AG04449 (cell line): ENCODE measurements at regions of chr4 and their contacts with region 1.

Region 1: GRCh38 chr4:67909905-67910584 is 26.2 kb upstream of the TMPRSS11D start:
- DNase-seq: no peak
- H3K4me3 ChIP-seq: no peak overlapping the region
- CTCF ChIP-seq: peak; percentile 24

Region 2: DNA sequence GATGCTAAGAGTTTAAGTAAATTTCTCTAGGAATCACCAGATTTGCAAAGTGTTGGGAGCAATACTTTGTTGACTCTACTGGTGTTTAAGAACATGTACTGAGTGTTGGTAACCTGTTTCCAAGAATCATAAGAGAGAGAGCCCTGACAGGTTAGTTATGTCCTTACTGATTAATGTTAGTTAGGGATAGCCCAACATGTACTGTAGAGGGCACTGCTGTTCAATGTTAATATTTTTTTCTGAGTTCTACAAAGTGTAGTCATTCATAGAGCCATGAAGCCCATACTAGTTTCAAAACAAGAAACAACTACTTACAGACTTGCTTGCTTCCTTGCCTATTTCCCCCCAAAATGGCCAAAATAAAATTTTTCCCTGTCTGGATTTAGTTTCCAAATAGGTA is 38.2 kb before region 1 on chr4:
- CTCF ChIA-PET with region 1: interaction called, 73 read pairs
- POLR2A ChIA-PET with region 1: no interaction called
- DNase-seq: no peak
- H3K4me3 ChIP-seq: no peak overlapping the region
- CTCF ChIP-seq: peak; percentile 50

Region 3: GRCh38 chr4:67885762-67886161 is 24.3 kb before region 1 on chr4:
- CTCF ChIA-PET with region 1: interaction called, 34 read pairs
- POLR2A ChIA-PET with region 1: no interaction called
- DNase-seq: peak; percentile 88
- H3K4me3 ChIP-seq: no peak overlapping the region
- CTCF ChIP-seq: no peak

Region 4: DNA sequence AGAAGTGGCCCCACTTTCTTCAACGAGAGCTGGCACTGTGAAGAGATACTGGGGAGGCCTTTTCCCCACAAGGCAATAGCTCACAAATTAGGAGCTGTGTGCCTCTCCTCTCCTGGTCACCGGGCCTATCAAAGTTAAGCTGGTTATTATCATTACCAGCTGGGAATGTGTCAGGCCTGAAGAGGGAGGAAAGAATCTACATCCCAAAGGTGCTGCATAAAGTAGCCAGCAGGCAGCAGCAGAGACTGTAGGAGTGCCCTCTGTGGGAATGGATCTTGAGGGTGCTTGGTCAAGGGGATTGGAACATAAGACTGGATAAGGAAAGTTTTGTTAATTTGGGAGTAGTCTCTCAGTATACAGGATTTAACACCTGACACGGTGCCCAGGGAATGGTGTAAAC is 17.1 kb before region 1 on chr4:
- CTCF ChIA-PET with region 1: interaction called, 26 read pairs
- POLR2A ChIA-PET with region 1: no interaction called
- DNase-seq: no peak
- H3K4me3 ChIP-seq: no peak overlapping the region
- CTCF ChIP-seq: peak; percentile 19

Region 5: DNA sequence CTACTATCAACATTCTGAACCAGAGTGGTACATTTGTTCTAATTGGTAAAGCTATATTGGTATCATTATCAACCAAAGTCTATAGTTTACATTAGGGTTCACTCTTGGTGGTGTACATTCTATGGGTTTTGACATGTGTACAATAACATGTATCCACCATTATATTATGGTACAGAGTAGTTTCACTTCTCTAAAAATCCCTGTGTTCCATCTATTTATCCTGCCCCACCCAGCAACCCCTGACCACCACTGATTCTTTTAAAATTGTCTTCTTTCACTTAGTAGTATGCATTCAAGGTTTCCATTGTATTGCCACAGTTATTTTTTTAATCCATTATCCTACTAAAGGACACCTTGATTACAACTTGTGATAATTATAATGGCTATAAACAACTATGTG is 10.9 kb before region 1 on chr4:
- CTCF ChIA-PET with region 1: interaction called, 26 read pairs
- POLR2A ChIA-PET with region 1: interaction called, 3 read pairs
- DNase-seq: no peak
- H3K4me3 ChIP-seq: no peak overlapping the region
- CTCF ChIP-seq: no peak